Right lobe of liver (tissue), 6 donors: ENCODE measurements at regions of chr7 and their contacts with region 1.

Region 1: GRCh38 chr7:139783647-139784385 is 6.0 kb upstream of the HIPK2 start:
- DNase-seq: no peak
- ATAC-seq: no peak
- H3K4me3 ChIP-seq: no peak overlapping the region
- H3K27ac ChIP-seq: no peak overlapping the region
- H3K4me1 ChIP-seq: peaks cover 0 to 5% (median 0%) of the 10 kb centered on the region in 4 donors
- H3K27me3 ChIP-seq: no peaks in the 10 kb centered on the region
- CTCF ChIP-seq: no peak
- POLR2A ChIP-seq: no peak

Region 2: DNA sequence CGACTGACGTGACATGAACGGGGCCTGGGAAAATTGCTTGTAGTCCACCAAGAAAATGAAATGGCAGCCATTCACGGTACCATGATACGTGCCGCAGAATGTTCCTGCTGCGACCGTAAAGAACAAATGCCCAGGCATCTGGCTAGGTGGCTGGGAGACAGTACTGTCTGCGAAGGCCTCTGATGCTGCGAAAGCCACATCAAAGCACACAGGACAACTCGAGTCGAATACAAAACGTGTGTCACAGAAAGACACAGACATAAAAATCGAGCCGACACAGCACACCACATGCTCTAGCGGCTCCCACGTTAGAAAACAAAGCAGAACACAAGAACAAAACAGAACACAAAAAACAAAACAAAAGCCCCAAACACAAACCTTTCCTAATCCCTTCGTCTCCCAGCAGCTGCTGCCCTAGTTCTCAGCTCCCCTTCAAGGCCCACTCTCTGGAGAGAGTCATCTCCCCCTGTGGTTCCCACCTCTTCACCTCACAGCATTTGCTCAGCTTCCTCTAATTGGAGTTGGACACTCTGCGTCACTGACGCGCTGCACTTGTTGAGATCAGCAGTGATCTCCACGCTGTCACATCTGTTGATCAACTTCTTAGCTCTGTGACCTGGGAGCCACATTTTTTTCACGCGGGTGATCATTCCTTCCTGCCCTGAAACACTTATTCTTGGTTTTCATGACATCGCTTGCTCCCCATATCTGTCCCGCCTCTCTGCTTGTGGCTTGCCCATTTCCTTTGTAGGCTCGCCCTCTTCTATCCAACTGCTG is 148.1 kb before region 1 on chr7:
- intact Hi-C with region 1: loop called in 1 of 2 experiments (anchors 10 kb)
- DNase-seq: no peak
- ATAC-seq: peak in 2 of 4 donors; percentile 46 to 70
- H3K4me3 ChIP-seq: no peak overlapping the region
- H3K27ac ChIP-seq: peak overlapping the region in 1 of 3 donors; percentile 8
- H3K4me1 ChIP-seq: peaks cover 0 to 1% (median 0%) of the 10 kb centered on the region in 4 donors
- H3K27me3 ChIP-seq: no peaks in the 10 kb centered on the region
- CTCF ChIP-seq: no peak
- POLR2A ChIP-seq: no peak

Region 3: GRCh38 chr7:139680676-139681462 is 102.9 kb before region 1 on chr7:
- intact Hi-C with region 1: no loop called
- DNase-seq: no peak
- ATAC-seq: peak; percentile 25 to 57 (median 46)
- H3K4me3 ChIP-seq: no peak overlapping the region
- H3K27ac ChIP-seq: peak overlapping the region; percentile 35 to 83 (median 78)
- H3K4me1 ChIP-seq: peaks cover 0 to 70% (median 35%) of the 10 kb centered on the region in 4 donors
- H3K27me3 ChIP-seq: no peaks in the 10 kb centered on the region
- CTCF ChIP-seq: no peak
- POLR2A ChIP-seq: no peak

Region 4: DNA sequence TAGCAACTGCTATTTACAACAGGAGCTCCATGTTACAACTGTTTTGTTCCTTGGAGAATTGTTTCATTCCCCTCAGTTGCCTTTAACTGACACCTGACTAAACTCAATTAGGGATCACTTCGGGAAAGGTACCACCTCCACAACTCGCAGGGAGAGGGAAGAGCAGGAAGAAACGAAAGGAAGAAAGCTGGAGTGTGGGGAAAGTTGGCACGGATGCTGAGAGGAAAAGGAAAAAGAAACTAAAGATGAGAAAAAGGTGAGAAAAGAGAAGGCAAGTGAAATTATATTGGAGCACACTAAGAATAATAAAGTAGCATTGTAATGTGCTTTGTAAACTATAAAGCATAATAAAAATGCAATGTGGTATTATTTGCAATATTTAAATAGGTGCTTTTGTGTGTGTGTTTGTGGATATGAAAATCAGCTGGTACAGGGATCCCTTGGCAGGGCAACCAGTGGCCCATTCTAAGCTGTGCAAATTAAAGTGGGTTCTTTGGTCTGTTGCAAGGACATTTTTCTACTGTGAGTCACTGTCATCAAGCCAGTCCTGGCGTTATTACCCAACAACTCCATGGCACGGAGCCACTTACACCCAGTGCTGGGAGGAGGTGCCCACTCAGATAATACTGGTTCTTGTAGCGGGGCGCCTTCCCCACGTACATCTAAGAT is 51.9 kb before region 1 on chr7:
- intact Hi-C with region 1: no loop called
- DNase-seq: peak; percentile 86 to 93 (median 86)
- ATAC-seq: peak; percentile 69 to 90 (median 83)
- H3K4me3 ChIP-seq: peak overlapping the region in 2 of 3 donors; percentile 12 to 30
- H3K27ac ChIP-seq: peak overlapping the region; percentile 25 to 78 (median 72)
- H3K4me1 ChIP-seq: peaks cover 3 to 72% (median 24%) of the 10 kb centered on the region in 4 donors
- H3K27me3 ChIP-seq: no peaks in the 10 kb centered on the region
- CTCF ChIP-seq: no peak
- POLR2A ChIP-seq: peak; percentile 17

Region 5: GRCh38 chr7:140022582-140023211 is 238.9 kb after region 1 on chr7:
- intact Hi-C with region 1: no loop called
- DNase-seq: peak in 1 of 3 donors; percentile 56
- ATAC-seq: peak; percentile 58 to 80 (median 66)
- H3K4me3 ChIP-seq: no peak overlapping the region
- H3K27ac ChIP-seq: no peak overlapping the region
- H3K4me1 ChIP-seq: peaks cover 0 to 8% (median 2%) of the 10 kb centered on the region in 4 donors
- H3K27me3 ChIP-seq: no peaks in the 10 kb centered on the region
- CTCF ChIP-seq: no peak
- POLR2A ChIP-seq: no peak

Region 6: DNA sequence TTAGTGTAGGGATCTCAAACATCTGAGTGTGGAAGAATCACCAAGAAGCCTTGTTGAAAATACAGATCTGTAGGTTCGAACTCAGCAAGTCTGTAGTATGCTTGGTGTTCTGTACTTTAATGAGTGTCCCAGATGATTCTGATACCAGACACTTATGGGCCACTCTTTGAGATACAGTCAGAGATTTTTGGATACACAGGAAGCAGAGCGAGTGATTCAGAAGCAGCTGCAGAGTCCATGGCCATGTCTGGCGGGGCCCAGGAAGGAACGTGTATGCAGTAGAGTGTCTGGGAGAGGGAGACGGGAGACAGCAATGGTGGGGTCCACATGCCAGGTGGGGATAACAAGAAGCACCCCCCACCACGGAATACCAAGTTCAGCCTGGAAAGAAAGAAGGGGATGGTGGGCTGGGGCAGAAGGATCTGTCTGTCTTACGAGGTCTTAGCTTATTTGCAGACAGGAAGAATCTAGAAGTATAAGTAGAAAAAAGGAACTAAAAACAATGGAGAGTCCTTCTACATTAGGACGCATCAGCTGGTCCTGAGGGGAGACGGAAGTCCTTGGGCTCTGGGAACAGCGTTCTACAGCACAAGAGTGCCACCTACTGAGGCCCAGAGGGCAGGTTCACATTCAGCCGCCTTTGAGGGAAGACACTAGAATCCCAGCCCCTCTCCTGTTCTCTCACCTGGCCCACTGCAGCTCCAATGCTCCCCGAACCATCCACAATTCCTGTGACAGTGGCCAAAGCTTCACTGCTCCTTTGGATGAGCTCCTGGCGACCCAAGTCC is 559.1 kb after region 1 on chr7:
- intact Hi-C with region 1: no loop called
- DNase-seq: peak in 2 of 3 donors; percentile 28 to 51
- ATAC-seq: peak; percentile 69 to 93 (median 90)
- H3K4me3 ChIP-seq: no peak overlapping the region
- H3K27ac ChIP-seq: no peak overlapping the region
- H3K4me1 ChIP-seq: no peaks in the 10 kb centered on the region
- H3K27me3 ChIP-seq: no peaks in the 10 kb centered on the region
- CTCF ChIP-seq: peak; percentile 19 to 47 (median 38)
- POLR2A ChIP-seq: no peak